Activated T-helper 1 cell treated with anti-CD3 and anti-CD28 coated beads, Interleukin-12 subunit alpha, Interleukin-12 subunit beta, Interleukin-2, Interleukin-4 antibody, amounts not matched to agents 30 ng/mL and 10 ng/mL and 1 ng/mL, durations not matched to agents 14 hours and 24 hours and 36 hours (primary cell): ENCODE measurements at regions of chr14 and their contacts with region 1.

Region 1: DNA sequence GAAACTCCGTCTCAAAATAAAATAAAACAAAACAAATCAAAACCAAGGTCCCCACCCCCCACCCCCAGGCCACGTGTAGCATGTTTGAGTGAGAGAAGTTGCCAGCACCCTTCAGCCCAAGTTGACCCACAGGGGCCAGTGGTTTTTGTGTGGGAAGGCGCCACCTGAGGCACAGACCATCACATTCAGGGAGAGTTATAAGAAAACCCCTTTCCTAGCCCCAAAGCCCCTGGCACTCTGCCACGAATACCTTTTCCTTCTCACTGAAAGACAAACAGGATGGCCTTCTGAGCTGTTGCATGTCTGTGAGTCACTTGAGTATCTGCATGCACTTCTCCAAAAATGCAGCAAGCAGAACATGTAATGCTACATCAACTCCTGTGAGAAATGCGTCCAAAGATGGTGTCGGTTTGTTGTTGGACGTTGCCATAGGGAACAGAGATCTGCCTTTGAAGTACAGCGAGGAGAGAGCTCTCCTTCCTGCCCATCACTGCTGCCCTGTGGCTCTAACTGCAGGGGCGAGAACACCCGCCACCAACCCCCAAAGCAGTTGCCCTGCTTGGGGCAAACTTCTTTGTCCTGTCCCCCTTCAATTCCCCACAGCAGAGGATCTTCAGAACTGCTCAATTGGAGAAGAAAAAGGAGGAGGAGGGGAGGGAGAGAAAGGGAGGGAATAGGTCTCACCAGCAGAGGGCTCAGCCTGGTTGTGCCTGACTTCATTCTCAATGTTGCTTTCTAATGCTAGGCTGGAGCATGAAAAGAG is 2.7 kb upstream of the TRAF3 start:
- DNase-seq: peak; percentile 57
- H3K4me3 Mint-ChIP-seq: peak overlapping the region; percentile 24
- H3K27ac Mint-ChIP-seq: peak overlapping the region; percentile 90
- H3K4me1 Mint-ChIP-seq: peaks cover 40% of the 10 kb centered on the region
- H3K27me3 Mint-ChIP-seq: no peaks in the 10 kb centered on the region

Region 2: GRCh38 chr14:102524466-102525218 is 249.9 kb before region 1 on chr14:
- intact Hi-C with region 1: loop called (anchors 10 kb)
- DNase-seq: peak; percentile 94
- H3K4me3 Mint-ChIP-seq: peak overlapping the region; percentile 92
- H3K27ac Mint-ChIP-seq: peak overlapping the region; percentile 88
- H3K4me1 Mint-ChIP-seq: peaks cover 27% of the 10 kb centered on the region
- H3K27me3 Mint-ChIP-seq: peaks cover 7% of the 10 kb centered on the region

Region 3: DNA sequence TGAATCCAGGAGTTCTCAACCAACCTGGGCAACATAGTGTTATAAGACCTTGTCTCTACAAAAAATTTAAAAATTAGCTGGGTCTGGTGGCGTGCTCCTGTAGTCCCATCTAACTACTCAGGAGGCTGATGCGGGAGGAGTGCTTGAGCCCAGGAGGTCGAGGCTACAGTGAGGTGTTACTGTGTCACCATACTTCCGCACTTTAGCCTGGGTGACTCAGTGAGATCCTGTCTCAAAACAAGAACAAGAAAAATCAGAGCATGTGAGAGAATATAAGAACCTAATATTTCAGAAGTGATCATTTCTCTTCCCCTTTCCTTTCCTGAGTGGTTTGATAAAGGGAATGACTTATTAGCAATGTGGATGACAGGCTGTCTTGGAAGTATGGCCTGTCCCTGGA is 12.2 kb after region 1 on chr14:
- intact Hi-C with region 1: loop called (anchors 1 kb)
- DNase-seq: no peak
- H3K4me3 Mint-ChIP-seq: no peak overlapping the region
- H3K27ac Mint-ChIP-seq: no peak overlapping the region
- H3K4me1 Mint-ChIP-seq: peaks cover 74% of the 10 kb centered on the region
- H3K27me3 Mint-ChIP-seq: no peaks in the 10 kb centered on the region

Region 4: DNA sequence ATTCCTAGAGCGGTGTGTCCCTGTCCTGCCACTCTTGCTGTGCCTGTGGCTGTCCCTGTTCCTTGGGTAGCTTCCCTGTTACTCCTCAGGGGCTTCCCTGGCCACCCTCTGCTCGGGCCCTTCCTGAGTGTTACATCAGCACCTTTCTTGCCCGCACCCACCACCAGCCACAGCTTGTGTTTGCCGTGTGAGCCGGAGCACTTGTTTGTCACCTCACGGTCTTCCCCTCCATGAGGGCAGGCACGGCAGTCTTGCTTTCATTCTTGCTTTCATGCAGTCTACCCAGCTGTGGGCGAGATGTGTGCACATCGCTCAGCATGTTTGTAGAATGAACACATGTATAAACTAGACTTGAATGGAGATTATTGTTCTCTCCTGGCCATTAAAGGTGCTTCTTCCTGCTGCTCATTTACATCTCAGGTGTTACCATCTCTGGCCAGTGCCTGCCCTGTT is 44.6 kb after region 1 on chr14:
- intact Hi-C with region 1: loop called (anchors 1 kb)
- DNase-seq: peak; percentile 70
- H3K4me3 Mint-ChIP-seq: peak overlapping the region; percentile 81
- H3K27ac Mint-ChIP-seq: peak overlapping the region; percentile 88
- H3K4me1 Mint-ChIP-seq: peaks cover 85% of the 10 kb centered on the region
- H3K27me3 Mint-ChIP-seq: no peaks in the 10 kb centered on the region

Region 5: DNA sequence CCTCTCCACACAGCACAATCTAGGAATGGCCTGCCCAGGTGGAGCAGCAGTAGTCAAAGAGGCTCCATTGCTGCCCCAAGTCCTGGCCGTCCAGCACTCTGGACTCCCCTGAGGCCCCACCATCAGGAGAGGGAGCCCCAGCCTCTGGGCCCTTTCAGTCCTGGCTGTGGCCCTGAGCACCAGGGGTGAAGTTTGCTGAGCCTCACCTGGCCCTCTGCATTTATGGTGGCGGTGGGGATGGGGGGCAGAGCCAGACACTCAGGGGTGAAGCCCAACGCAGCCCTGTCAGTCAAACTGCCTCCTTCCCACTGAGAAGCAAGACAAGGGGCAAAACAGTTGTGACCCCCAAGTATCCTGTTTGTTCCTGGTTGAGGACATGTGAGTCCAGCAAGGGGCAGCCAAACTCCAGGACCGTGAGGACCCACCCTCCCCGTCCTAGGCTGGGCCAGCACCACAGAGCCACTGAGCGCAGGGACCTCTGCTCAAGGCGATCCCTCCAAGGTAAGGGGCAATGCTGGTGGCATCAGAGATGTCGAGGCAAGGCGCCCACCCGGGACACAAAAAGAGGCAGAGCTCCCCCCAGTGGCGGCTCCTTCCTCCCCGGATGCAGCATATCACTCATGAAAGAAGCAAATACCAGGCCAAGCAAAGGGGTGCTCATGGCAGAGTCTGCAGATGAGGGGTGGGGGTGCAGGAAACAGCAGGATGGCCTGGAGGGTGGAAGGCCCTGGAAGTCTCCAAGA is 143.1 kb after region 1 on chr14:
- intact Hi-C with region 1: loop called (anchors 2 kb)
- DNase-seq: peak; percentile 29
- H3K4me3 Mint-ChIP-seq: no peak overlapping the region
- H3K27ac Mint-ChIP-seq: no peak overlapping the region
- H3K4me1 Mint-ChIP-seq: no peaks in the 10 kb centered on the region
- H3K27me3 Mint-ChIP-seq: no peaks in the 10 kb centered on the region

Region 6: GRCh38 chr14:103372603-103373304 is 598.2 kb after region 1 on chr14:
- intact Hi-C with region 1: no loop called
- DNase-seq: no peak
- H3K4me3 Mint-ChIP-seq: no peak overlapping the region
- H3K27ac Mint-ChIP-seq: no peak overlapping the region
- H3K4me1 Mint-ChIP-seq: no peaks in the 10 kb centered on the region
- H3K27me3 Mint-ChIP-seq: no peaks in the 10 kb centered on the region